ENCODE measurements at regions of chr2 and their contacts with region 1.

Region 1: DNA sequence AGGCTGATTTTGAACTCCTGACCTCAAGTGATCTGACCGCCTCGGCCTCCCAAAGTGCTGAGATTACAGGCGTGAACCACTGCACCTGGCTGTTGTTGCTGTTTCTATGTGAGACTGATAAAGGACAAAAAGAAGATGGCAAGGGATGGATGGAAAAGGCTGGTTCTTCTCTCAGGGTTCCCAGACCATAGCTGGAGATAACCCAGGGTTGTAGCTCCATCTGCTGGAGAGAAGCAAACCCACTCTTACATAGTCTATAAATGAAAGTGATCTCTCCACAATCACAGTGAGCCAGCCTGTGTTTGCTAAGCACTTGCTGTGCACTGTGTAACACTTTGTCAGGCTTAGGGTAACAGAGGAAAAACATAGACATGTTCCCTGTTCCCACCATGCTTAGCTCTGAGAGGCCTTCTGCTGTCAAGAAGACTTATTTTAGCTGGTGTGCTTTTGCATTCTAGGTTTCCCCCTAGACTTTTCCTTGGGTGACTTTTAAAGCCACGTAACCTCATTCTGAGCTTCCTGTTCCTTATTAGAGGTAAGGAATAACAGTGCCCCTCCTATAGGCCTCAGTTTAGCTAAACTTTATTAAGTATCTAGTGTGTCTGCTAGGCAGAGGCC is 49.7 kb downstream of the LIMS1 start:
- DNase-seq: peak; percentile 83
- H3K4me3 Mint-ChIP-seq: no peak overlapping the region
- H3K27ac Mint-ChIP-seq: peak overlapping the region; percentile 20
- H3K4me1 Mint-ChIP-seq: peaks cover 52% of the 10 kb centered on the region
- H3K27me3 Mint-ChIP-seq: no peaks in the 10 kb centered on the region
- CTCF ChIP-seq: peak; percentile 61

Region 2: DNA sequence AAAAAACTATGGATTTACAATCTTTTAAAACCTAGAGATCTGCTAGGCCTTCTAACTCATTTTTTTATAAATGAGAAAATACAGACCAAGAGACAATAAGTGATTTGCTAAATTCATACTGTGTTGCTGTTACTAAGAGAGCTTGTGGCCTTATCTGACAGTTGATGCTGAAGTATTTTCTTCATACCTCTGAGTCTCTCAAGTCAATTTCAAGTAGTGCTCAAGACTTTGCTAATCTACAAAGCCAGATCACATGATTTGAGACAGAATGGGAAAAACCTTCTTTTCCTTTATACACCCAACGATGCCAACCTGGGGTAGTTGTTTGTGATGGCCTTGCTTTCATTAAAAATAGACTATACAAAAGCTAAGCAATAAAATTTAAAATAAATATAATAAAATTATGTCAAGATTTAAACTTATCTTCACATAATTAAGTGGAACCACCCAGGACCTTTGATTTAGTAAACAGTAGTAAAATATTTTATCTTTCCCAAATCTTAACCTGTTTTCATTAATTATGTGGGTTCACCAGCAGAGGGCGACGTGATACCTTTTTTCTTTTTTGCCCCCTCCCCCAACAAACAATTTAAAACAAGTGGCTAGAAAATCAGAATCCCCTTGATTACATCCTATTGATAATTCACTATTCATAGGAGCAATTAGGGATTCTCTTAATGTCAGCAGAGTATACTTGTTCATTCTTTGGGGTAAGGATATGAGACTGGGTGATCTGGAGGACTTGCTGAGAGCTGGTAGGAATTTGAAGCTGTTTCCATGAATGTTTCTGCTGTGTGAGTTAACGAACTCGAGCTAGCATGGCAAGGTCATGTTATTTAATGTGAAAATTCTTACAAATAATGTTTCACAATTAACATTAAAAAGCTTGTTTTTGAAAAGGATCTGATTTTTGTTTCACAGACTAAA is 647.3 kb before region 1 on chr2:
- CTCF ChIA-PET with region 1: no interaction called
- POLR2A ChIA-PET with region 1: no interaction called
- intact Hi-C with region 1: loop called (anchors 5 kb)
- DNase-seq: peak; percentile 40
- H3K4me3 Mint-ChIP-seq: no peak overlapping the region
- H3K27ac Mint-ChIP-seq: no peak overlapping the region
- H3K4me1 Mint-ChIP-seq: peaks cover 11% of the 10 kb centered on the region
- H3K27me3 Mint-ChIP-seq: peaks cover 16% of the 10 kb centered on the region
- CTCF ChIP-seq: peak; percentile 59

Region 3: DNA sequence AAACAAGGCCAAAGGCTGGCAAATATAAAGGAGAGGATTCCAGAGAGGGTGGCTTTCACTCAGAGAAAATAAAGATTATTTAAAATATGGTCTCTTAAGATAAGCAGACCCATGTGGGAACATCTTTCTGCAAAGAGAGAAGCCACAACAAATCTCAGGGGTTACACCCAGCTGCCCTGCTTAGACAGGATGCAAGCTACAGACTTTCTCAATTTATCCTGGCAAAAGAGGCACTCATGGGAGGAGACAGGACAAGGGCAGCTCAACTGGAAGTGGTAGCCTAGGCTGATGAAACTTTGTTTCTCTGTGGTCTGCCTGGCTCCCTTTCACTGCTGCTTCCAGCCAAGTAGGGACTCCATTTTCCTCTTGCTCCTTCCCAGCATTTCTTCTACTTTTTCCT is 232.1 kb before region 1 on chr2:
- CTCF ChIA-PET with region 1: interaction called, 19 read pairs
- POLR2A ChIA-PET with region 1: interaction called, 5 read pairs
- intact Hi-C with region 1: loop called (anchors 1 kb)
- DNase-seq: peak; percentile 11
- H3K4me3 Mint-ChIP-seq: no peak overlapping the region
- H3K27ac Mint-ChIP-seq: no peak overlapping the region
- H3K4me1 Mint-ChIP-seq: peaks cover 6% of the 10 kb centered on the region
- H3K27me3 Mint-ChIP-seq: no peaks in the 10 kb centered on the region
- CTCF ChIP-seq: no peak

Region 4: DNA sequence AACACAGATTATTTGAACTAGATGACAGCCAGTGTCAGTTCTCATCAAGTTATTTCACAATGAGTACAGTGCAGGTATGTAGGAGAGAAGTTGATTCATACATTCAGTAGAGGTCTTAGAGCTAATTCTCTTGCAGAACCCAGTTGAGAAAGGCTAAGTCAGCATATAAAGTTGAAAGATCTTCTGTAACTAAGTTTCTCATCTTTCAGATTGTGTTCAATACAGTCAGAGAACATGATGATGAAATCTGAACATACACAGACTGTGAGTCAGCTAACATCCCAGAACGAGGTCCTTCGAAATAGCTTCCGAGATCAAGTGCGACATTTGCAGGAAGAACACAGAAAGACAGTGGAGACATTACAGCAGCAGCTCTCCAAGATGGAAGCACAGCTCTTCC is 91.6 kb before region 1 on chr2:
- CTCF ChIA-PET with region 1: interaction called, 11 read pairs
- POLR2A ChIA-PET with region 1: interaction called, 7 read pairs
- intact Hi-C with region 1: loop called (anchors 2 kb)
- DNase-seq: peak; percentile 90
- H3K4me3 Mint-ChIP-seq: peak overlapping the region; percentile 6
- H3K27ac Mint-ChIP-seq: no peak overlapping the region
- H3K4me1 Mint-ChIP-seq: peaks cover 11% of the 10 kb centered on the region
- H3K27me3 Mint-ChIP-seq: no peaks in the 10 kb centered on the region
- CTCF ChIP-seq: no peak

Region 5: GRCh38 chr2:108542071-108542470 is 41.9 kb before region 1 on chr2:
- CTCF ChIA-PET with region 1: interaction called, 12 read pairs
- POLR2A ChIA-PET with region 1: interaction called, 263 read pairs
- intact Hi-C with region 1: no loop called
- DNase-seq: no peak
- H3K4me3 Mint-ChIP-seq: no peak overlapping the region
- H3K27ac Mint-ChIP-seq: peak overlapping the region; percentile 17
- H3K4me1 Mint-ChIP-seq: peaks cover 26% of the 10 kb centered on the region
- H3K27me3 Mint-ChIP-seq: no peaks in the 10 kb centered on the region
- CTCF ChIP-seq: no peak

Region 6: DNA sequence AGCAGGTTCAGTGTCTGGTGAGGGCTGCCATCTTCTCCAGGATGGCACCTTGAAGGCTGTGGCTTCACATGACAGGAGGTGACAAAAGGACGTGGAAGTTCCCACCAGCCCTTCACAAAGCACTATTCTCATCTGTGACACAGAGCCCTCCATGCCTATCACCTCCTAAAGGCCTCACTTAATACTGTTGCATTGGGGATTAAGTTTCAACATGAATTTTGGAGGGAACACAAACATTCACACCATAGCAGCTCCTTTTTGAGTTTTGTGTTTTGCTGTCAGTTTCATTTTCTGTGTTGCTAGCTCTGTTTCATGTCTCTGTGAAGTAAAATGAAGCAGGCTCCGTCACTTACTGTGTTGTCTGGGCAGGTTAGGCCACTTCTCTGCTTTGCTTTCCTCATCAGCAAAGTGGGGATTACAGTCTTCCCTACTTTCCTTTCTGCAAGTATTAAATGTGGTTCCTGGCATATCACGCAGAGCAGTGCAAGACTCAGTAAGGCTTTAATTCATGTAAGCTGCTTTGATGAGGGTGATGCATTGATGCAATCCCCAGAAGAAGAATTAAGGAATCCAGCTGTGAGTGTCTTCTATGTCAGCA is 18.1 kb before region 1 on chr2:
- CTCF ChIA-PET with region 1: interaction called, 13 read pairs
- POLR2A ChIA-PET with region 1: interaction called, 3 read pairs
- intact Hi-C with region 1: no loop called
- DNase-seq: no peak
- H3K4me3 Mint-ChIP-seq: no peak overlapping the region
- H3K27ac Mint-ChIP-seq: no peak overlapping the region
- H3K4me1 Mint-ChIP-seq: peaks cover 8% of the 10 kb centered on the region
- H3K27me3 Mint-ChIP-seq: no peaks in the 10 kb centered on the region
- CTCF ChIP-seq: no peak

Region 7: GRCh38 chr2:108637304-108637669 is 53.3 kb after region 1 on chr2:
- CTCF ChIA-PET with region 1: interaction called, 111 read pairs
- POLR2A ChIA-PET with region 1: interaction called, 8 read pairs
- intact Hi-C with region 1: no loop called
- DNase-seq: peak; percentile 46
- H3K4me3 Mint-ChIP-seq: no peak overlapping the region
- H3K27ac Mint-ChIP-seq: peak overlapping the region; percentile 35
- H3K4me1 Mint-ChIP-seq: peaks cover 38% of the 10 kb centered on the region
- H3K27me3 Mint-ChIP-seq: no peaks in the 10 kb centered on the region
- CTCF ChIP-seq: no peak

Measured in MCF 10A (cell line).